Naive thymus-derived CD4-positive, alpha-beta T cell (primary cell): ENCODE measurements at regions of chr3 and their contacts with region 1.

Region 1: DNA sequence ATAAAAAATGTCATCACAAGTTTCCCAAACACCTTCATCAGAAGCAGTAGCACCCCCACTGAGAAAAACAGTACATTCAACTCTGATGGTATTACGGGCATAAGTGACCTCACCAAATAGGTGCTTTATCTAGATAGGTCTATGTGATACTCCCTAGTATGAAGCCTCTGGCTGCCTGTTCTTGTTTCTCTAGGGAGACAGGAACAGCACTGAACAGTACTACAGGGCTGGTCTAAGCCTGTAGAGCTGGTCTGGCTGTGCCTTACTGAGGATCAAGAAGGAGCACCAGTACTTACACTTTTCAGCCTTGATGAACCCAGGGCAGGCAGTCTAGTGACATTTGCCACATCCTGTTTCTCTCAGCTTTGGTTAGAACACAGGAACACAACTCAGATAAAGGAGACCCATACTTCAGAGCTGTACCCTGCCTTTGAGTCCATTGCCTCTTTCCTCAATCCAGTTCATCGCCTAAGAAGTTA is 35.9 kb downstream of the OXNAD1 start:
- DNase-seq: peak in 7 of 9 donors; percentile 68 to 86 (median 82)
- ATAC-seq: peak; percentile 86
- H3K4me3 ChIP-seq: peak overlapping the region; percentile 48
- H3K4me3 Mint-ChIP-seq: peak overlapping the region; percentile 78 to 96 (median 92)
- H3K27ac ChIP-seq: peak overlapping the region; percentile 66
- H3K27ac Mint-ChIP-seq: peak overlapping the region; percentile 86 to 98 (median 94)
- H3K4me1 ChIP-seq: peaks cover 78 to 95% of the 10 kb centered on the region in 2 donors
- H3K4me1 Mint-ChIP-seq: peaks cover 61 to 99% (median 96%) of the 10 kb centered on the region in 7 donors
- H3K27me3 ChIP-seq: no peaks in the 10 kb centered on the region
- H3K27me3 Mint-ChIP-seq: no peaks in the 10 kb centered on the region

Region 2: DNA sequence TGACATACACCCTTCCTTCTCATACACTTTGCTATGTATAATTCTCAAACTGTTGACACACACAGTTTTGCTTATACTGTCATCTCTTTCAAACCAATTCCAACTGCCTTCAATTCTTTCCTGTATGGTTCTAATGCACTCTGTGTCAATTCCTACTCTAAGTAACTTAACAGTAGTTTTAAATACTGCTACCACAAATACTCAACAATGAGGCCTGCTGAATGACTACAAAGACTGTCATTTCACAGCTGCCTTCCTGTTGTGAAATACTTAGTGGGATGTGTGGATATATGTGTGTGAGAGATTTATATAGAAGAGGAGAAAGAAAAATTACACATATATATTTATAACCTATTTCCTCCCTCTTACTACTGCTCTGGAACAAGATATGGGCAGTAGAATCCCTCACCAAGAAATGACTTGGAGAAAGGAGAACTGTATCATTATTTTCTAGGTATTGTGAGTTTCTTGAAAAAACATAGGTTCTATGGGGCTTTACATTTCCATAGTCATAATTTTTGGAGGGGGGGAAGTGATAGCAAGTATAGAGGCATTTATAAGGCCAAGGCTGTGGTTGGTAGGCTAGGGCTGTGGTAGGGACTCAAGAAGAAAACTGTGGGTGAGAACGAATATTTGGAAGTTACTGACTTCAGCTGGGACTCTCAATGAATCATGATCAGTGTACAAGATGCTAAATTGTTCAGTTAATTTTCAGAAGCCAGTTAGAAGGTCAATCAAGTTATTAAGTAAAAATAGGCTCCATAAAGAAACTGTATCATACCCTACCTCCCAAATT is 591.8 kb before region 1 on chr3:
- CTCF ChIA-PET with region 1: no interaction called
- POLR2A ChIA-PET with region 1: no interaction called
- intact Hi-C with region 1: no loop called
- DNase-seq: no peak
- ATAC-seq: no peak
- H3K4me3 ChIP-seq: no peak overlapping the region
- H3K4me3 Mint-ChIP-seq: no peak overlapping the region
- H3K27ac ChIP-seq: no peak overlapping the region
- H3K27ac Mint-ChIP-seq: peak overlapping the region in 1 of 9 donors; percentile 21
- H3K4me1 ChIP-seq: no peaks in the 10 kb centered on the region
- H3K4me1 Mint-ChIP-seq: peaks cover 0 to 9% (median 0%) of the 10 kb centered on the region in 7 donors
- H3K27me3 ChIP-seq: no peaks in the 10 kb centered on the region
- H3K27me3 Mint-ChIP-seq: no peaks in the 10 kb centered on the region

Region 3: DNA sequence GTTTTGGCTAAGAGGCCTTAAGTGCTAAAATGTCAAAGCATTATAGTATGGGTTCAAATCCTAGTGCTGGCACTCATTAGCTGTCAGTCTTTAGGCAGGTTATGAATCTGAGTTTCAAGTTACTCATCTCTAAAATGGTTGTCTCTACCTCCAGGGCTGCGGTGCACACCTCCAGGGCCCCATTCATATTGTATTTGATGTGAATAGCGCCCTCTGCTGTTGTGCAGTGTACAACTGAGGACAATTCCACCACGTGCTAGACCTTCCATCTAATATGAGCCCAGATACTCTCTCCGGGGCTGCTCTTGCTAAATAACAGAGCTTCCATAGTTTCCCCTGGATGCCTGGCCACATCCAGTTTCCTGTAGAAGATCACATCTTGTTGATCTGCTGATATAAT is 18.4 kb after region 1 on chr3:
- CTCF ChIA-PET with region 1: interaction called, 238 read pairs
- POLR2A ChIA-PET with region 1: interaction called, 319 read pairs
- intact Hi-C with region 1: loop called (anchors 1 kb)
- DNase-seq: peak in 8 of 9 donors; percentile 66 to 81 (median 78)
- ATAC-seq: peak; percentile 93
- H3K4me3 ChIP-seq: no peak overlapping the region
- H3K4me3 Mint-ChIP-seq: peak overlapping the region; percentile 35 to 78 (median 60)
- H3K27ac ChIP-seq: peak overlapping the region; percentile 60
- H3K27ac Mint-ChIP-seq: peak overlapping the region; percentile 79 to 98 (median 91)
- H3K4me1 ChIP-seq: peaks cover 40 to 58% of the 10 kb centered on the region in 2 donors
- H3K4me1 Mint-ChIP-seq: peaks cover 44 to 89% (median 81%) of the 10 kb centered on the region in 7 donors
- H3K27me3 ChIP-seq: no peaks in the 10 kb centered on the region
- H3K27me3 Mint-ChIP-seq: no peaks in the 10 kb centered on the region

Region 4: DNA sequence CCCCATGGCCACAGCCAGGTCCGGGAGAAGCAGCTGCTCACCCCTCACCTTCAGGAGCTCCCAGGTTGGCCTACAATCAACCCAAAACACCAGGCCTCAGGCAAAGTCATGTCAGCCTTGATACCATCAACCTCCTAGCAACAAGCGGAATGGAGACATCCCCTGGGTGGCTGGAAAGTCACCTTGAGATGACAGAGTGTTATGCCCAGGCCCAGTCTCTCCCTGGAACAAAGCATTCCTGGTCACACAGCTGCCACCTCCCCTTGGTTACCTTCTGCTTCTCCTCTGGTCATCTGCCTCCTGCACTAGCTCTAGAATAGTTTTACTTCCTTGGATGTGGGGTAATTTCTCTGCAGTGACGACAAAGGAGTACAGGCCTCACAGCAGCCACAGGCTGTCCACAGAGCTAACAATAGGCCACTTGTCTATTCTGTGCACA is 97.7 kb after region 1 on chr3:
- CTCF ChIA-PET with region 1: no interaction called
- POLR2A ChIA-PET with region 1: no interaction called
- intact Hi-C with region 1: no loop called
- DNase-seq: no peak
- ATAC-seq: no peak
- H3K4me3 ChIP-seq: no peak overlapping the region
- H3K4me3 Mint-ChIP-seq: no peak overlapping the region
- H3K27ac ChIP-seq: no peak overlapping the region
- H3K27ac Mint-ChIP-seq: peak overlapping the region in 2 of 9 donors; percentile 2 to 59
- H3K4me1 ChIP-seq: no peaks in the 10 kb centered on the region
- H3K4me1 Mint-ChIP-seq: peaks cover 21 to 47% (median 35%) of the 10 kb centered on the region in 7 donors
- H3K27me3 ChIP-seq: no peaks in the 10 kb centered on the region
- H3K27me3 Mint-ChIP-seq: no peaks in the 10 kb centered on the region

Region 5: GRCh38 chr3:16427103-16427965 is 126.4 kb after region 1 on chr3:
- CTCF ChIA-PET with region 1: no interaction called
- POLR2A ChIA-PET with region 1: no interaction called
- intact Hi-C with region 1: no loop called
- DNase-seq: no peak
- ATAC-seq: peak; percentile 22
- H3K4me3 ChIP-seq: no peak overlapping the region
- H3K4me3 Mint-ChIP-seq: no peak overlapping the region
- H3K27ac ChIP-seq: no peak overlapping the region
- H3K27ac Mint-ChIP-seq: peak overlapping the region in 2 of 9 donors; percentile 54 to 80
- H3K4me1 ChIP-seq: no peaks in the 10 kb centered on the region
- H3K4me1 Mint-ChIP-seq: peaks cover 13 to 47% (median 24%) of the 10 kb centered on the region in 7 donors
- H3K27me3 ChIP-seq: no peaks in the 10 kb centered on the region
- H3K27me3 Mint-ChIP-seq: no peaks in the 10 kb centered on the region

Region 6: DNA sequence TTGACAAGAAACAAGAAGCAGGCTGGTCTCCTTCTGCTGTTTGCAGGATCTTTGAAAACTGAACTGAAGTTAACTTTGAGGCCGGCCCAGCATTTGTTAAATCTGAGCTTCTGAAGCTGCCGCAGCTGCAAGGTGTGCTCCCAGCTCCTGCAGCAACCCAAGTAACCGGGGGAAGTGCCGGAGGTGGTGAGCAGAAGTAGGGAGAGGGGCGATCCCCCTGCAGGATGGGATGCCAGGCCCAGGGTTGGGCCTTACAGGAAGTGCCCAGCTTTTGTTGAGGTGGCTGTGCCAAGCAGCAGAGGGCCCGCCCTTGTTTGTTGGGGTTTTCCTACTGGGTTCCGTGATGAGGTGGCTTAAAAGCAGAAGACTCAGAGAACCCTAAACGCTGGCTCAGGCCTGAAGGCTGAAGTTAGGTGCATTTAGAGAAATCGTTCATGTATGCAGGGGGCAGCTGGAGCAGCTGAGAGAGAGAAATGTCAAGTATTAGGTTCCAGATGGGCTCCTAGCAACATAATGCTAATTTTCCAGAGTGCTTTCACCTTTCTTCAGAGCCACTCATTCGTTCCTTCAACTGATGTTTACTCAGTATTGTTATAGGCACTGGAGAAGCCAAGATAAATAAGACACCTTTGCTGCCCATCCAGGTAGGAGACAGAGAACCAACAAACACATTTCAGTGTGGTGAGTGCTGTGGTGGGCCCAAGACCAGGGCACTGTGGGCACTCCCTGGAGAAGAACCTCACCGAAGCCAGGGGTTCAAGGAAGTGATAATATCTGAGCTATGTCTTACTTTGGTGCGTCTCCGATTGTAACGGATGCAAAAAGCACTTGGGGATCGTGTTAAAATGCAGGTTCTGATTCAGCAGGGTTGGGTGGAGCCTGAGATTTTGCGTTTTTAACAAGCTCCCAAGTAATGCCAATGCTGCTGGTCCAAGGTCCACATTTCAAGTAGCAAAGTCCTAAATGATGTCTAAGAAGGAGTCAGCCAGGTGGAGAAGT is 541.7 kb after region 1 on chr3:
- CTCF ChIA-PET with region 1: interaction called, 3 read pairs
- POLR2A ChIA-PET with region 1: interaction called, 4 read pairs
- intact Hi-C with region 1: loop called (anchors 5 to 10 kb)
- DNase-seq: peak; percentile 49 to 85 (median 78)
- ATAC-seq: peak; percentile 95
- H3K4me3 ChIP-seq: peak overlapping the region; percentile 61
- H3K4me3 Mint-ChIP-seq: peak overlapping the region; percentile 78 to 93 (median 87)
- H3K27ac ChIP-seq: peak overlapping the region; percentile 76
- H3K27ac Mint-ChIP-seq: peak overlapping the region; percentile 92 to 99 (median 98)
- H3K4me1 ChIP-seq: peaks cover 49 to 51% of the 10 kb centered on the region in 2 donors
- H3K4me1 Mint-ChIP-seq: peaks cover 34 to 96% (median 90%) of the 10 kb centered on the region in 7 donors
- H3K27me3 ChIP-seq: no peaks in the 10 kb centered on the region
- H3K27me3 Mint-ChIP-seq: peaks cover 0 to 6% (median 0%) of the 10 kb centered on the region in 5 donors